Esophagus muscularis mucosa (tissue), 4 donors: ENCODE measurements at regions of chr17 and their contacts with region 1.

Region 1: GRCh38 chr17:38584350-38584925 is 21.3 kb downstream of the SRCIN1 start:
- DNase-seq: no peak
- H3K4me3 ChIP-seq: no peak overlapping the region
- H3K27ac ChIP-seq: no peak overlapping the region
- H3K4me1 ChIP-seq: peaks cover 5 to 21% (median 17%) of the 10 kb centered on the region in 4 donors
- H3K27me3 ChIP-seq: peaks cover 0 to 87% (median 9%) of the 10 kb centered on the region in 4 donors
- CTCF ChIP-seq: peak; percentile 85 to 97 (median 86)
- EP300 ChIP-seq: no peak
- POLR2A ChIP-seq: no peak

Region 2: DNA sequence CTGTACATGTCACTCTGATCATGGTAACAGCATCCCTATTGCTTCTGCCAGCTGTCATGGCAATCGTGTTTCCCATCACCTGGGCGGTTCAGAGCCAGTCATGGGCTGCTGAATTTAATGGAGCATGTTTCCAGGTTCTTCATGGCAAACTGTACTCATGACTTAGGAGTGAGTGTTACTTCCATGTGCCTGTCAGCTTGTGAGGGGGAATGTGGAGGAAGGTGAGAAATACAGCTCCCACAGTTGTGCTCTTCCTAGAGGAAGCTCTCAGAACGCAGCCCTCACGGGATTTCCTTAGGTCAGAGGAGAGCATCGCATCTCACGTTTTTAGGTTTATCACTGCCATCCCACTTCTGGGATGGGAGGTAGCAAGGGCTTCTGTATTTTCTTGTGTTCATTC is 184.2 kb before region 1 on chr17:
- intact Hi-C with region 1: no loop called
- DNase-seq: no peak
- H3K4me3 ChIP-seq: no peak overlapping the region
- H3K27ac ChIP-seq: no peak overlapping the region
- H3K4me1 ChIP-seq: no peaks in the 10 kb centered on the region
- H3K27me3 ChIP-seq: no peaks in the 10 kb centered on the region
- CTCF ChIP-seq: no peak
- EP300 ChIP-seq: no peak
- POLR2A ChIP-seq: no peak

Region 3: DNA sequence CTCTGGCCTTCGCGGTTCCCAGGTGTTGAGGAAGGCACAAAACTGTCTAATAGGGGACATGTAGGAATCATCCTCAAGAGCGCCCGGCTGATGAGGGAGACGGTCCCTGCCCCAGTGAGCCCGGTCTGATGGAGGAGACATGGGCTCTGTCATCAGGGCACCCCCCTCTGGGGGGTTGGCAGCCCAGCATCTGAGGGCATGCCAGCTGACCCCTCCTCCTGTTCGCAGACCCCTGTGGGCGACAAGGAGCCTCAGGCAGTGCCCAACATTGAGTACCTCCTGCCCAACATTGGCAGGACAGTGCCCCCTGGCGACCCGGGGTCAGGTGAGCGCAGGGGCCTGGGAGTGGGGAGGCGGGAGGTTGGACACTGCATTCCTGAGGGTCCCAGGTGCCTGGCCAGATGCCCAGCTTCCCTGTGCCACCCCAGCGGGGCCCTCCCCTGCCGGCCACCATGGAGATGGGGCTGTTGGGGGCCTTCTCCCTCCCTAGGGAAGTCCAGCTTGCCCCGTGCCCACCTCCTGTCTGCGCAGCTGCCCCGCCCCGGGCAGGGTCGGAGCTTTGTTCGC is 86.2 kb before region 1 on chr17:
- intact Hi-C with region 1: loop called (anchors 10 kb)
- DNase-seq: no peak
- H3K4me3 ChIP-seq: no peak overlapping the region
- H3K27ac ChIP-seq: no peak overlapping the region
- H3K4me1 ChIP-seq: no peaks in the 10 kb centered on the region
- H3K27me3 ChIP-seq: no peaks in the 10 kb centered on the region
- CTCF ChIP-seq: no peak
- EP300 ChIP-seq: no peak
- POLR2A ChIP-seq: no peak

Region 4: DNA sequence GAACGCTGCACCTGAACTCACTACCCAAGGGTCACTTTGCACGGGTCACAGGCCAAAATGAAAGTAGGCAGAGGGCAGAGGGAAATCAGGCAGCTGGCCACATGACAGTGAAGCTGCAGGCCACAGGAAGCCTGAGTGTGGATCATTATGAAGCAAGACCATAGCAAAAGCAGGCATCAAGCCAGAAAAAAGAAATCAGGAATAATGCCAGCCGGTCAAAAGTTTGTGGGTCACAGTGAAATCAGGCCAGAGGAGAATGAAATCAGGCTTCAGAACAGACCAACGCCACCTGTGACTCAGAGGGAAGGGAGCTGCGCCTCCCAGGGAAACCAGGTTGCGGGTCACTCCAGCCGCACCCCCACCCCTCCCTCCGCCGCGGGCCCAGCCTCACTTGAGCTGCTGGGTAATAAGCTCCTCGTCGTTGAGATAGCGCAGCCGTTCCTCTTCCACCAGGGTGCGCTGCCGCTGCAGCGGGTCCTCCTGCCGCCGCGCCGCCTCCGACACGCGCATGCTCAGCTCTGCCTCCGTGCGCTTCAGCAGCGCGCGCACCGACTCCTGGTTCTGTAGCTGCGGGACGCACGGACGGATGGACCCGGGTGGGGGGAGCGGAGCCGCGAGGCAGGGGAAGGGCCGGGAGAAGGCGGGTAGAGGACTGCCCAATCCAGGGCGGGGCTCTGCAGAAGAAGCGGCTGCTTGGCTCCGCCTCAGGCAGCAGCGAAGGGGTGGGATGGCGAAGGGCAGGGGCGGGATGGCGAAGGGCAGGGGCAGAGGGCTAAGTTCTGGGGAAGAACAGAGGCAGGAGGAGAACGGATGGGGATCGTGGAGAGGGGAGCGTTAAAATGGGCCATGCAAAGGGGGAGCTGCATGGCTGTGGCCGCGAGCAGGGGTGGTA is 26.4 kb before region 1 on chr17:
- intact Hi-C with region 1: loop called (anchors 2 kb)
- DNase-seq: peak; percentile 96
- H3K4me3 ChIP-seq: peak overlapping the region; percentile 45 to 63 (median 50)
- H3K27ac ChIP-seq: peak overlapping the region in 3 of 4 donors; percentile 18 to 36 (median 31)
- H3K4me1 ChIP-seq: peaks cover 28 to 52% (median 34%) of the 10 kb centered on the region in 4 donors
- H3K27me3 ChIP-seq: peaks cover 24 to 79% (median 41%) of the 10 kb centered on the region in 4 donors
- CTCF ChIP-seq: peak; percentile 92 to 98 (median 94)
- EP300 ChIP-seq: no peak
- POLR2A ChIP-seq: no peak